ENCODE measurements at regions of chr1 and their contacts with region 1.

Region 1: GRCh38 chr1:8571200-8571984 is 246.0 kb downstream of the RERE start:
- DNase-seq: no peak
- ATAC-seq: 0 out of 3 replicates have a peak, but pooled peaks have one; percentile 36
- H3K4me3 ChIP-seq: no peak overlapping the region
- H3K27ac ChIP-seq: no peak overlapping the region
- H3K4me1 ChIP-seq: no peaks in the 10 kb centered on the region
- H3K27me3 ChIP-seq: no peaks in the 10 kb centered on the region
- CTCF ChIP-seq: peak in 2 of 3 experiments; percentile 10 to 16; a peak in 1 of 6 replicates
- EP300 ChIP-seq: no peak
- POLR2A ChIP-seq: no peak
- RAD21 ChIP-seq: 0 out of 2 replicates have a peak, but pooled peaks have one; percentile 10

Region 2: GRCh38 chr1:8554956-8555534 is 16.3 kb before region 1 on chr1:
- CTCF ChIA-PET with region 1: interaction called, 11 read pairs
- POLR2A ChIA-PET with region 1: no interaction called
- RAD21 ChIA-PET with region 1: no interaction called
- SMC1A ChIA-PET with region 1: interaction called, 6 read pairs
- in situ Hi-C with region 1: no loop called
- intact Hi-C with region 1: no loop called
- DNase-seq: no peak
- ATAC-seq: peak; percentile 71
- H3K4me3 ChIP-seq: no peak overlapping the region
- H3K27ac ChIP-seq: no peak overlapping the region; the same call in 1 of the 2 replicates
- H3K4me1 ChIP-seq: peaks cover 9% of the 10 kb centered on the region
- H3K27me3 ChIP-seq: no peaks in the 10 kb centered on the region
- CTCF ChIP-seq: no peak
- EP300 ChIP-seq: no peak
- POLR2A ChIP-seq: no peak
- RAD21 ChIP-seq: no peak

Region 3: DNA sequence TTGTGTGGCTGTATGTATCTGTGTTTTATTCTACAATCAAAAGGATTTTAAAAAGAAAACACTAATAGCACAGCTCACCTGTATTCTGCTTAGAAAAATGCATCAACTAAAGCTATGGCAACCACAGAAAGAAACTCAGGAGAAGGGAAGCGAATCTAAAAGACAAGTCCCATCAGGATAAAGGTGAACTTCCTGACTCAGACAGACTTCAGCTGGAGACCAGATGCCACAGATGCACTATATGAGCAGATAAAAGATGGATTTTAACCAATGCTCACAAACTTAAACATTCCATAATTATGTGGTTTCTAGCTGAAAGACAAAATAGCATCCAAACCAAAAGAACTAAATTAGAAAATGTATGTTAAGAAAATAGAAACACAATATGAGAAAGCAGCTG is 15.0 kb after region 1 on chr1:
- CTCF ChIA-PET with region 1: interaction called, 13 read pairs
- POLR2A ChIA-PET with region 1: interaction called, 3 read pairs
- RAD21 ChIA-PET with region 1: no interaction called
- SMC1A ChIA-PET with region 1: interaction called, 10 read pairs
- in situ Hi-C with region 1: no loop called
- intact Hi-C with region 1: no loop called
- DNase-seq: no peak
- ATAC-seq: no peak
- H3K4me3 ChIP-seq: no peak overlapping the region
- H3K27ac ChIP-seq: no peak overlapping the region
- H3K4me1 ChIP-seq: peaks cover 4% of the 10 kb centered on the region; the same call in 1 of the 2 replicates
- H3K27me3 ChIP-seq: no peaks in the 10 kb centered on the region
- CTCF ChIP-seq: no peak
- EP300 ChIP-seq: no peak
- POLR2A ChIP-seq: no peak
- RAD21 ChIP-seq: no peak